Kidney (tissue), 22 donors: ENCODE measurements at regions of chr20 and their contacts with region 1.

Region 1: GRCh38 chr20:47274401-47275108 is 81.9 kb downstream of the ZMYND8 start:
- DNase-seq: peak in 2 of 5 donors; percentile 33 to 52
- H3K4me3 ChIP-seq: no peak overlapping the region
- H3K27ac ChIP-seq: peak overlapping the region; percentile 67 to 79
- H3K4me1 ChIP-seq: peaks cover 0 to 6% (median 6%) of the 10 kb centered on the region in 3 donors
- H3K27me3 ChIP-seq: no peaks in the 10 kb centered on the region
- CTCF ChIP-seq: no peak

Region 2: GRCh38 chr20:47055699-47056369 is 218.7 kb before region 1 on chr20:
- intact Hi-C with region 1: no loop called
- DNase-seq: no peak
- H3K4me3 ChIP-seq: no peak overlapping the region
- H3K27ac ChIP-seq: no peak overlapping the region
- H3K4me1 ChIP-seq: no peaks in the 10 kb centered on the region
- H3K27me3 ChIP-seq: no peaks in the 10 kb centered on the region
- CTCF ChIP-seq: no peak

Region 3: DNA sequence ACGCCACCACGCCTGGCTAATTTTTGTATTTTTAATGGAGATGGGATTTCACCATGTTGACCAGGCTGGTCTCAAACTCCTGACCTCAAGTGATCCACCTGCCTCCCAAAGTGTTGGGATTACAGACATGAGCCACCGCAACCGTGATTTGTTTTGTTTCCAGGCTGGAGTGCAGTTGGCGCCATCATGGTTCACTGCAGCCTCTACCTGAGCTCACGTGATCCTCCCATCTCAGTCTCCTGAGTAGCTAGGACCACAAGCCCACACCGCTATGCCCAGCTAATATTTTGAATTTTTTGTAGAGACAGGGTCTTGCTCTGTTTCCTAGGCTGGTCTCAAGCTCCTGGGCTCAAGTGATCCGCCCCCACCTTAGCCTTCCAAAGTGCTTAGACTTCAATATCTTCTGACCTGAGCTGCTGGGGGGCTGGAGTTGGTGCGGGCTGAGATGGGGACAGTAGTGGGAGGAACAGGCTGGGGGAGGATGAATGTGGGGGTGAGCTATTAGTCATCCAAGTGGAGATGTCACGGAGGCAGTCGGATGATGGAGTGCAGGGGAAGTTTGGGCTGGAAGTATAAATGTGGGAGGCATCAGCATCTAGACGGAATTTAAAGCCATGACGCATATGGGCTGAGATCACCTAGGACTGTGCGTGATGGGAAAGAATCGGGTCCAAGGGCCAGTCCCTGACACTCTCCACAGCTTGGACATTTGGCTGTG is 105.0 kb after region 1 on chr20:
- intact Hi-C with region 1: loop called (anchors 5 kb)
- DNase-seq: peak in 1 of 5 donors; percentile 47
- H3K4me3 ChIP-seq: no peak overlapping the region
- H3K27ac ChIP-seq: no peak overlapping the region
- H3K4me1 ChIP-seq: peaks cover 0 to 3% (median 3%) of the 10 kb centered on the region in 3 donors
- H3K27me3 ChIP-seq: no peaks in the 10 kb centered on the region
- CTCF ChIP-seq: no peak